Left colon (tissue), 2 donors: ENCODE measurements at regions of chr9 and their contacts with region 1.

Region 1: GRCh38 chr9:136631038-136632000 is 31.4 kb upstream of the EGFL7 start:
- DNase-seq: peak; percentile 71 to 86
- ATAC-seq: peak; percentile 66

Region 2: GRCh38 chr9:136483589-136484152 is 147.6 kb before region 1 on chr9:
- intact Hi-C with region 1: loop called (anchors 2 to 5 kb)
- DNase-seq: peak; percentile 89 to 95
- ATAC-seq: peak; percentile 56

Region 3: DNA sequence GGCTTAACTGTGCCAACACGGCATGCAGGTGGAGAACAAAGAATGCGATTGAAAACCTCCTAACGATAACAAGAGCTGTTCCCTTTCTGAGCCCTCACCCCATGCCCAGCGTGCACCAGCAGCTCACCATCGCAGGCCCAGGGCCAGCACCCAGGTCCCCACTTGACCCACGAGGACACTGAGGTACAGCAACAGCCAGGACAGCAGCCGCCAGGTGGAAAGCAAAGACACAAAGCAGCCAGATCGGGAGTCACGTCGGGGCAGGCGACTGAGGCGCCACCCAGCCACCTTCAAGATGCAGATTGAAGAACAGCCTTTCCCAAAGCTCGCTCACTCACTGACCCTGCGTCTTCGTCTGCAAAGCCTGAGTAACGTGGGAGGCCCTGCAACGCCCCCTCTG is 141.6 kb before region 1 on chr9:
- intact Hi-C with region 1: loop called (anchors 2 to 5 kb)
- DNase-seq: no peak
- ATAC-seq: no peak

Region 4: DNA sequence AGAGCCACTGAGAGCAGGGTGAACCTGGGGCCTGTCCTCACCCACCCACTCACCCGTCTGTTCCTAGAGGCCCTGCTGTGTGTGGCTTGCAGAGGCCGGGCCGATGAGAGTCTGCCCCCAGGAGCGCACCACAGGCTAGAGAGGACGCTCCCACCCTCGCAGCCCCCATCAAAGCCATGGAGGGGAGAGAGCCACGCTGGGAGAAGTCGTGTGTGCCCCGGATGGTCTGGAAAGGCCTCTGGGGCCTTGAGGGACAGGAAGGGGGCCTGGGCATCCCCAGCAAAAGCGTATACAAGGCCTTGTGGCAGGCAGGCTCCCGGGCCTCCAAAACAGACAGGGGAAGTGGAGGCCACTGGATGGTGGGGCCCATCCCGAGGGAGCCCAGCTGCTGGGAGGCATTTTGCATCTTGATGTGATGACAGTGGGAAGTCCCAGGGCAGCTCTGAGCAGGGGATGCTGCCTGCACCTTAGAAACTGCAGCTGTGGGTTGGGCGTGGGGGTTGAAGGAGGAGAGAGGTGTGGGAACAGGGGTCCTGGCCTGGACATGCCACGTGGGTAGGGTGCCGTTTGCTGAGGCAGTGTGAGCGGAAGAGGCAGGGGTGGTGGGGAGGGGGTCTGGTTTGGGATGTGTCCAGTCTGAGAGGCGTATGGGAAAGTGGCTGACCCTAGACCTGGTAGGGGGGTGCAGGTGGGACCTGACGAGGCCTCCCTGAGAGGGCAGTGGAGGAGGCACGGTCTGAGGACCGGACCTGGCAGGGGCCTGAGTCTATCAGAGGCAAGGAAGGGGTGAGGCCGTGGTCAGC is 42.5 kb before region 1 on chr9:
- intact Hi-C with region 1: no loop called
- DNase-seq: no peak
- ATAC-seq: no peak

Region 5: GRCh38 chr9:136784249-136784996 is 153.1 kb after region 1 on chr9:
- intact Hi-C with region 1: no loop called
- DNase-seq: no peak
- ATAC-seq: no peak